ENCODE measurements at regions of chr16 and their contacts with region 1.

Region 1: GRCh38 chr16:74998481-74999218 is at the start of gene ZNRF1:
- DNase-seq: no peak
- H3K4me3 ChIP-seq: peak within 1 kb of the TSS; percentile 61
- CTCF ChIP-seq: peak; percentile 78

Region 2: DNA sequence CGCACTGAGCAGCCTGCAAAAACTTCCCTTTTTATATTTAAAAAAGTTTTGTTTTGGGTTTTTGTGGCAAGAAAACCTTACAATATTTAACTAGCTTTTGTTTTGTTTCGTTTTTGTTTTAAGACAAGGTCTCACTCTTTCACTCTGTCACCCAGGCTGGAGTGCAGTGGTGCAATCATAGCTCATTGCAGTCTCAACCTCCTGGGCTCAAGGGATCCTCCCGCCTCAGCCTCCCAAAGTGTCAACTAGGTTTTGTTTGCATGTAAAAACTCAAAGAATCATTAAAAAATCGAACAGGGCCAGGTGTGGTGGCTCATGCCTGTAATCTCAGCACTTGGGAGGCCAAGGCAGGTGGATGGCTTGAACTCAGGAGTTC is 146.2 kb before region 1 on chr16:
- CTCF ChIA-PET with region 1: no interaction called
- POLR2A ChIA-PET with region 1: no interaction called
- DNase-seq: no peak
- H3K4me3 ChIP-seq: no peak overlapping the region
- CTCF ChIP-seq: no peak

Region 3: GRCh38 chr16:74984535-74985296 is 13.9 kb before region 1 on chr16 and contains the start of gene WDR59:
- CTCF ChIA-PET with region 1: interaction called, 45 read pairs
- POLR2A ChIA-PET with region 1: no interaction called
- DNase-seq: peak; percentile 90
- H3K4me3 ChIP-seq: peak within 1 kb of the TSS; percentile 98
- CTCF ChIP-seq: no peak

Region 4: GRCh38 chr16:75011634-75012307 is 13.1 kb after region 1 on chr16:
- CTCF ChIA-PET with region 1: interaction called, 44 read pairs
- POLR2A ChIA-PET with region 1: no interaction called
- DNase-seq: peak; percentile 67
- H3K4me3 ChIP-seq: peak overlapping the region; percentile 26
- CTCF ChIP-seq: no peak

Region 5: GRCh38 chr16:75029557-75030253 is 31.1 kb after region 1 on chr16:
- CTCF ChIA-PET with region 1: interaction called, 10 read pairs
- POLR2A ChIA-PET with region 1: no interaction called
- DNase-seq: peak; percentile 63
- H3K4me3 ChIP-seq: no peak overlapping the region
- CTCF ChIP-seq: no peak

Region 6: DNA sequence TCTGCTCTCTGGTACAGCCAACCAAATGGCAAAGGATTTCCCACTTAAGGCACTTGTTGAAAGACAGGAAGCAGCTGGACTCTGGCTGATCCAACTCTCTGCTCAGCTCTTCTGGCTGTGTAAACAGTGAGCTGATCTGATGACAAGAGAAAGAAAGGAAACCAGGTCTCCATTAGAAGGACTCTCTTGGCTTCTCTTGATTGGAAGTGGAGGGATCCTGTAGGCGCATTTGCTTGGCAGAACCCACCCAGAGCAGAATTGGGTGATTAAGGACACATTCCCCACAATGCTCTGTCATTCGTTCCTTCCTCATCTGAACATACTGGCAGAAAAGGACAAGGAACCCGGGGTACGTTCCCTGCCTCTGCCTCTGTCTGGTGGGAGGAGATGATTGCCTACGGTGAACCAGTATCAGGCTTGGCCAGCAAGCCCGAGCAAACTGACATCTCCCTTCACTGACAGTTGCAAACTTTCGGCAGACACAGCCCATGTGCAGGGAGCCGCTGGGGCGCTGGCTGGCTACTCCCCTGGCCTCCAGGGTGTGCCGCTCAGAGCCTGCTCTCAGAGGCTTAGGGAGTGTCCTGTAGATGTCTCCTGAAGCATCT is 88.8 kb after region 1 on chr16:
- CTCF ChIA-PET with region 1: interaction called, 10 read pairs
- POLR2A ChIA-PET with region 1: no interaction called
- DNase-seq: no peak
- H3K4me3 ChIP-seq: no peak overlapping the region
- CTCF ChIP-seq: no peak

Region 7: DNA sequence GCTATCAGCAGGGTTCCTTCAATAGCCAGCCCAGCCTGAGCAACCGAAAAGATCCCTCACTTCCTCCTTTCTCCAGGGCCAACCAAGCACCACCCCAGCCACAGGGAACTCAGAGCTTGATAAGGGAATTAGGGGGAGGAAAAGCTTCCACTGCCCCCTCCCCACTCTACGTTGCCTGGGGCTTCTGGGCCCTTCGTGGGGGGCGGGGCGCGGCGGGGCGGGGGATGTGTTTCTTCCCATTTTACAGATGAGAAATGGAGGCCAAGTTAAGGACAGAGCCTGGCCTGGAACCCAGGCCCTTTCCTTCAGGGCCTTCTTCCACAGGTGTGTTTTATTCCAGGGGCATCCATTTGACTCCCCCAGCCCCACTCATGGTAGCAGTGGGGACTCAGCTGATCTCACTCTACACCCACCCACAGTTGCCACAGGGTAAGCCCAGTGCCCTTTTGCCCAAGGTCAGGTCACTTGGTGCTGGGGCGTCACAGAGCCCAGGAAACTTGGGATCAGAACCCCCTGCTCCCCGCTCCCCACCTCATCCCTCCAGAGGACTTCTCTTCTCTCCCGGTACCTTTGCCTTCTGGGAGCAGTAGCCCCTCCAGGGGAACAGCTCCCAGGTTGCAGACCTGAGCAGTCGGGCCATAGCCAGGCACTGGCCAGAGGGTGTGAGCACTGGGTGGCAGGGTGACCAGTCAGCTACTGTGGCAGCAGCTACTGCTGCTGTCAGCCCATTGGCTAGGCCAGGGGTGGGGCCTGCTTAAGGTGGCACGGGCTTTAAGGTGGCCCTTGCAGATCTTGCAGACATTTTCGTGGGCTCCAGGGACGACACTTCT is 117.6 kb after region 1 on chr16 and contains the start of gene LDHD:
- CTCF ChIA-PET with region 1: interaction called, 450 read pairs
- POLR2A ChIA-PET with region 1: no interaction called
- DNase-seq: no peak
- H3K4me3 ChIP-seq: peak within 1 kb of the TSS; percentile 53
- CTCF ChIP-seq: no peak

Region 8: GRCh38 chr16:75121949-75122568 is 123.4 kb after region 1 on chr16:
- CTCF ChIA-PET with region 1: interaction called, 12 read pairs
- POLR2A ChIA-PET with region 1: no interaction called
- DNase-seq: no peak
- H3K4me3 ChIP-seq: no peak overlapping the region
- CTCF ChIP-seq: no peak

Measured in AG04449 (cell line).